H1 (cell line): ENCODE measurements at regions of chr1 and their contacts with region 1.

Region 1: DNA sequence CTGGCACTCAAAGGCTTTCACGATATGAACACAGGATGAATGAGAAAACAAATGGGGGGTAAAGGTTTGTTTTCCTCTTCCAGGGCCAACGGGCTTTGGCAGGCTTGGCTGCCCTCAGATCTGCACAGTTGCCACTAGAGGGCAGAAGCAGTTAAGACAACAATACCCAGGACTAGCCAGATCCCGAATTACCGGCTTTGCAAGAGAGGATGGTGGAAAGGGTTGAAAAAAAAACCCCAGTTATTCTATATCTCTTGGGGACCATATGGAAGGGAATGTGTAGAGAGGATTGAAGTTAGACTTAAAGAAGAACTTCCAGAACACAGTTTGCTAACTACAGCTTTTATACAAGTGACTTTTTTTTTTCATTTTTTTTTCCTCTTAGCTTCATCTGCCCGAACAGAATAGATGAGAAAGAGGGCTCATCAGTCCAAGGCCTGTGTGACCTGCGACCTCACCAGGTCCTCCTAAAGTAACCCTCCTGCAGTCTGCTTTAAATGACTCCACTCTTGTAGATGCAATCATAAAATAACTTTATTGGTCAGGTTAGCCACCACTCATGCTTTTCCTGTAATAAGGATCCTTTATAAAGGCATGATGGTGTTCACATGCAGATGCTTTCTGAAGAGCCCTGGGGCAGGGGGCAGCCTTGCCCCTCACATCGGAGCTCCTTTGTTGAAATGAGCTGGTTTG is 10.7 kb downstream of the FMOD start:
- DNase-seq: no peak
- H3K4me3 ChIP-seq: no peak overlapping the region
- H3K27ac ChIP-seq: 0 out of 2 replicates have a peak overlapping the region, but pooled peaks have one; percentile 13
- H3K4me1 ChIP-seq: peaks cover 2 to 4% (median 3%) of the 10 kb centered on the region in 4 experiments; a peak in 5 of 7 replicates
- H3K27me3 ChIP-seq: peaks cover 0 to 3% (median 0%) of the 10 kb centered on the region in 4 experiments; a peak in 2 of 7 replicates
- CTCF ChIP-seq: peak; percentile 78 to 96 (median 88)
- EP300 ChIP-seq: no peak
- POLR2A ChIP-seq: no peak
- RAD21 ChIP-seq: peak; percentile 95 to 96

Region 2: GRCh38 chr1:203304919-203305808 is 35.1 kb before region 1 on chr1 and contains the start of gene BTG2:
- CTCF ChIA-PET with region 1: interaction called, 785 read pairs
- POLR2A ChIA-PET with region 1: no interaction called
- DNase-seq: peak; percentile 70 to 85
- H3K4me3 ChIP-seq: peak within 1 kb of the TSS; percentile 74 to 92 (median 78)
- H3K27ac ChIP-seq: no peak within 1 kb of the TSS
- H3K4me1 ChIP-seq: peaks cover 14 to 33% (median 18%) of the 10 kb centered on the region in 4 experiments
- H3K27me3 ChIP-seq: peaks cover 41 to 86% (median 77%) of the 10 kb centered on the region in 4 experiments
- CTCF ChIP-seq: no peak
- EP300 ChIP-seq: no peak
- POLR2A ChIP-seq: peak; percentile 83 to 85
- RAD21 ChIP-seq: no peak
- total RNA-seq, gene BTG2: 4.1 and 4.8 TPM in 2 replicates

Region 3: GRCh38 chr1:203351037-203352013 is 11.1 kb after region 1 on chr1 and contains the start of gene FMOD:
- CTCF ChIA-PET with region 1: interaction called, 253 read pairs
- POLR2A ChIA-PET with region 1: no interaction called
- DNase-seq: no peak
- H3K4me3 ChIP-seq: no peak within 1 kb of the TSS
- H3K27ac ChIP-seq: no peak within 1 kb of the TSS
- H3K4me1 ChIP-seq: no peaks in the 10 kb centered on the region
- H3K27me3 ChIP-seq: no peaks in the 10 kb centered on the region; a peak in 1 of 7 replicates
- CTCF ChIP-seq: peak in 2 of 3 experiments; percentile 34 to 45; a peak in 3 of 4 replicates
- EP300 ChIP-seq: no peak
- POLR2A ChIP-seq: no peak
- RAD21 ChIP-seq: peak in 1 of 2 experiments; percentile 34; a peak in 1 of 4 replicates
- total RNA-seq, gene FMOD: 0.27 and 0.32 TPM in 2 replicates

Region 4: DNA sequence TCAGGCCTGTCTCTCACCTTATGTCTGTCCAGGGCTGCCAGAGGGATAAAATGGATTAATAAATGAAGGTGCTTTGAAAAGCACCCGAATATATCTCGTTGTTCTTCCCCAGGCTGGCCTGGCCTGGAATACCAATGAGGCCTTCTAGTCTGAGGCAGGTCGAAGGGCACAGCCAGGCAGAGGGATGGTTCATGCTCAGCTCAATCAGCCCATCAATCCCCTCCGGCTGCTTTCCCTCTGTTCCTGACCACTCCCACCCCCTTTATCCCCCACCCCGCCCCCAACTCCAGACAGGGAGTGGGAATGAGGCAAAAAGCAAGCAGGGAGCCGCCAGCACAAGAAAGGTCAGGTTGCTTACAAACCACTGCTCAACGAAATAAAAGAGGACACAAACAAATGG is 95.4 kb after region 1 on chr1:
- CTCF ChIA-PET with region 1: interaction called, 166 read pairs
- POLR2A ChIA-PET with region 1: no interaction called
- DNase-seq: no peak
- H3K4me3 ChIP-seq: no peak overlapping the region
- H3K27ac ChIP-seq: no peak overlapping the region
- H3K4me1 ChIP-seq: no peaks in the 10 kb centered on the region
- H3K27me3 ChIP-seq: no peaks in the 10 kb centered on the region
- CTCF ChIP-seq: no peak
- EP300 ChIP-seq: no peak
- POLR2A ChIP-seq: no peak
- RAD21 ChIP-seq: no peak

Region 5: DNA sequence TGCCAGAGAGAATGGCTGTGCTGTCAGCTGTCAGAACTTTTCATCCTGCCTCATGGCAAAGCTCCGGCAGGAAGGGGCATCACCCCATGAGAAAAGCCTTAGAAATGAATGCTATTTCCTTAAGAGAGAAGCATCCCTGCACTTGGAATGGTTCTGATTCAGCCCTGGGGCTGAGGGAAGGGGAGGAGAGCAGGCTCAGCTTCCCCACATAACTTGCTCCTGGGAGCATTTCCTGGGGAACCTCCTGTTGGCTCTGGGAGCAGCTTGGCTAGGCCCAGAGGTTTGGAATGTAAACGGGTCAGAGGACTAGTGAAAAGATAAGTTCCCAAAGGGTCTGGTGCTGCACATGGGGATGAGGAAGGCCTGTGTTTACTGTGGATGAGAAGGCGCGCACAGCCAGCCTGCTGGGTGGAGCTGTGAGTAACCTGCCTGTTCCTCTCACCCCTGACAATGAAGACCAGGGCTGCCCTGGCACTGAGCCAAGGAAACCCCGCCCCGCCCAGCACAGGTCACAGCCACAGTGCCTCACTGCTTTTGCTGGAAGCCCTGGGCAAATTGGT is 140.3 kb after region 1 on chr1:
- CTCF ChIA-PET with region 1: interaction called, 330 read pairs
- POLR2A ChIA-PET with region 1: interaction called, 3 read pairs
- DNase-seq: no peak
- H3K4me3 ChIP-seq: no peak overlapping the region
- H3K27ac ChIP-seq: no peak overlapping the region
- H3K4me1 ChIP-seq: peaks cover 0 to 13% (median 8%) of the 10 kb centered on the region in 4 experiments; a peak in 4 of 7 replicates
- H3K27me3 ChIP-seq: no peaks in the 10 kb centered on the region
- CTCF ChIP-seq: no peak
- EP300 ChIP-seq: no peak
- POLR2A ChIP-seq: no peak
- RAD21 ChIP-seq: no peak

Region 6: DNA sequence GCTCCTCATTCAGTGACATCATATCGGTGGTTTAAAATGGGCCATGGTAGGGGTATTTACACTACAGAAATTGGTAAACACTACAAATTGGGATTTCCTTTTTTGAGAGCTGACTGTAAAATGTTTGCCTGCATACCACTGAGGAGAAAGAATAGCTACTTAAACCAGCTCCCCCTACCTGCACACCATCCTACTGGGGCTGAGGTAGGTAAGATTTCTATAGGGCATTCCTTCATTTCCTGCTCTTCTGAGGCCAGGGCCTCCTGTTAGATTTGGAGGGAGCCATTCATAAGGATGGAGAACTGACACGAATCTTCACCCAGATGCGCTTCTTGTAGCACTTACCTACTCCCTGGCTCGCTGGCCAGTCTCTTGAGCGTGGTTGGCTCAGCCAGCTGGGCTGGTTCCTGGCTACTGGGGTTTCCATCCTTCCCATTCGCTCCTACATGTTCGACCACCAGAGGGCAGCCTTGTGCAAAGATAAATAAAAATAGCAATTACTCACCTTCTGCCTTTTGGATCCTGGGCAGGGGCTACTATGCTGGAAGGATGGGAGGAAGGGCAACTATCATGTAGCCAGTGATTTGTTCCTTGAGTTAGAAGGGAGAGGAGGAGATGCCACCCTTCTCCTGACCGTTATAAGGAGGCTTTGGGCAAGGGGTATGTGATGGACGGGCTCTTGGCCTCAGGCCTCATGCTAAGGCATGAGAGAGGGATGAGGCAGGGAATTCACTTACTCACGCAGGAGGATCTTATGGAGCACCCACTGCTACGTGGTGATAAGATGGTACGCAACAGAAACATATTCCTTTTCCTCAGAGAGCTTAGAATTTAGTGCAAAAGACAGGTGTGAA is 164.4 kb after region 1 on chr1:
- CTCF ChIA-PET with region 1: interaction called, 21 read pairs
- POLR2A ChIA-PET with region 1: no interaction called
- DNase-seq: peak in 1 of 2 experiments; percentile 90
- H3K4me3 ChIP-seq: no peak overlapping the region
- H3K27ac ChIP-seq: no peak overlapping the region
- H3K4me1 ChIP-seq: peaks cover 2 to 17% (median 11%) of the 10 kb centered on the region in 4 experiments
- H3K27me3 ChIP-seq: no peaks in the 10 kb centered on the region
- CTCF ChIP-seq: peak; percentile 60 to 87 (median 78)
- EP300 ChIP-seq: no peak
- POLR2A ChIP-seq: no peak
- RAD21 ChIP-seq: peak; percentile 94 to 95